Natural killer cell (primary cell): ENCODE measurements at regions of chr10 and their contacts with region 1.

Region 1: DNA sequence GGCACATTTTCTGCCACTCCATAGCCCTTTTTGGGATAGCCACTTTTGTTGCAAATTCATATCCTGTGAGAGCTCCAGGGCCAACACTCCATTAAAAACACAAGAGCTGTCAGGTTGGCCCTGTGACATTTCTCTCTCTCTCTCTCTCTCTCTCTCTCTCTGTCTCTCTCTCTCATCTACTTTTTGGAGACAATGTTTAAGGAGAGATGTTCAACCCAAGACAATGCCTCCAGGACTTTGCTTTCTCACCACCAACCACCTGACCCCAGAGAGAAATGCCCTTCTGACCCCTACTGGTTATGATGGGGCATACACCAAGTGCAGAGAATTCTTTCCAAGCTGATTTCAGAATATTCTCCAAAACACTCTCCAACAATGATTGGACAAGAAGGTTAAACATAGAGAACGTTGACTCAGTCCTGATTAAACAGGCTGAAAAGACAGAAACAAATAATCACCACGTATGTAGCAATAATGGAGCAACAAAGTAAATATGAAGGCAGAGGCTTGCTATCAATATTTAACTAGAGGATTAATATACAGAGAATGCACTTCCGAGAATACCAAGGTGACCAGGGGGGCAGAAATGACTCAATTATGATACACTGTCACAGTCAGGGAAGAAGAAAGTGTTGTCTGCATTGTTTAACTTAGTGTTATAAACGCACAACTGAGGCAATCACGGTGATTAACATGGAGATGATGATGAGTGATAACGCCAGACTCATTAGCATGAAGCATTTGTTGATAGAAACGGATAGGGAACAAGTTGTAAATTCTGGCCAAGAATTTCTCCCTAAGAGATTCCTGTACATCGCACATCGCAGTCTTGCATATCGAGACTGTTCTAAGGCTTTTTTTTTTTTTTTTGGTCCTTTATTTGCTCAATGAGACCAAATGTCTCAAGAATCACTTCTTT is 178.5 kb downstream of the NRP1 start:
- DNase-seq: peak in 1 of 2 donors; percentile 83
- ATAC-seq: peak; percentile 67 to 98 (median 94)
- H3K4me3 ChIP-seq: no peak overlapping the region
- H3K4me3 Mint-ChIP-seq: no peak overlapping the region
- H3K27ac ChIP-seq: no peak overlapping the region
- H3K27ac Mint-ChIP-seq: peak overlapping the region; percentile 2 to 19
- H3K4me1 ChIP-seq: peaks cover 10% of the 10 kb centered on the region
- H3K4me1 Mint-ChIP-seq: peaks cover 18 to 33% of the 10 kb centered on the region in 2 donors
- H3K27me3 ChIP-seq: no peaks in the 10 kb centered on the region
- H3K27me3 Mint-ChIP-seq: peaks cover 0 to 2% of the 10 kb centered on the region in 2 donors
- CTCF ChIP-seq: peak; percentile 75

Region 2: DNA sequence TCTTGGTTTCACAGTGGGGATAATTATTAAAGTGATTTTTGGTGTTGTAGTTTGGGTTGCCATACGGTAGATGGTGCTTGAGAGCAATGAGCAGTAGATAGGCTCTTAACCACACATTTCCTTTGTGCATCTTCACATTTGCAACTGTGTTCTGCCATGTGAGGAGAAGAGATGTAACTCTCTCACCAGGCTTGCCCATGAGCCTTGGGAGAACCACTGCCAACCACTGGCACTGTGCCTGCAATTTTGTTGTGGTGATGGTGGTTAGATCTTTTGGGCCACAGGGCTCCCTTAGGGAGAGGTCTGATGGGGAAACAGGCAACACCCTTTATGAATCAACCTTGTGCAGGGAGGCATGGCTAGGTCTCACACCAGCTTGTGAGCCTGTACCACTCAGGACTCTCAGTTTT is 505.7 kb before region 1 on chr10:
- intact Hi-C with region 1: loop called (anchors 10 kb)
- DNase-seq: peak in 1 of 2 donors; percentile 46
- ATAC-seq: peak; percentile 55 to 81 (median 69)
- H3K4me3 ChIP-seq: no peak overlapping the region
- H3K4me3 Mint-ChIP-seq: no peak overlapping the region
- H3K27ac ChIP-seq: no peak overlapping the region
- H3K27ac Mint-ChIP-seq: peak overlapping the region in 1 of 2 donors; percentile 73
- H3K4me1 ChIP-seq: peaks cover 6% of the 10 kb centered on the region
- H3K4me1 Mint-ChIP-seq: peaks cover 12 to 17% of the 10 kb centered on the region in 2 donors
- H3K27me3 ChIP-seq: no peaks in the 10 kb centered on the region
- H3K27me3 Mint-ChIP-seq: no peaks in the 10 kb centered on the region
- CTCF ChIP-seq: peak; percentile 25

Region 3: DNA sequence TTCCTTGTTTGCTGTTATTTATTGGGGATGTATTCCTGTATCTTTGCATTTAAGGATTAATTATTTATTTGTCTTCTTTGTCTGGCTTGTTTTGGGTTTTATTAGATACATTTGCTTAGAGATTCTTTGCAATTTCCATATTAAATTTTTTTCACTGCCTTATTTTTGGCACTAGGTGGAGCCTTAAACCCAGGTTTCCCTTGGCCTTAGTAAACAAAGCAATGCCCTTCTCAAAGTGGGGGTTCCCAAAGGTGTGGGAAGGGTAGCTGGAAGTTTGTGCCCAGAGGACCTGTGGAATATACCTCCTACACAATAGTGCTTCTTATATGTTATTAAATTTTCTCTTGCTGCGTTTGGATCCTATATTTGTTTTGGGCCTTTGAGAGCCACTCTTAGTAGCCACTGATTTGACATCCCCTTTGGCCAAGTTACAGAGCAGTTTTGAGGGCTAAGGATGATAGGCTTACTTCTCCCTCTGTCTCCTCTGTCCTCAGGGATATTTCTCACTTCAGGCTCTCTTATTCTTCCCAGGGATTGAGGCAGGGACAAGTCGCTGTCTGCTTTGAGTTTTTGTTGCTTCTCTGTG is 360.3 kb before region 1 on chr10:
- intact Hi-C with region 1: loop called (anchors 1 kb)
- DNase-seq: peak in 1 of 2 donors; percentile 66
- ATAC-seq: peak in 2 of 3 donors; percentile 61
- H3K4me3 ChIP-seq: no peak overlapping the region
- H3K4me3 Mint-ChIP-seq: no peak overlapping the region
- H3K27ac ChIP-seq: no peak overlapping the region
- H3K27ac Mint-ChIP-seq: no peak overlapping the region
- H3K4me1 ChIP-seq: no peaks in the 10 kb centered on the region
- H3K4me1 Mint-ChIP-seq: no peaks in the 10 kb centered on the region
- H3K27me3 ChIP-seq: no peaks in the 10 kb centered on the region
- H3K27me3 Mint-ChIP-seq: peaks cover 0 to 8% of the 10 kb centered on the region in 2 donors
- CTCF ChIP-seq: peak; percentile 85

Region 4: DNA sequence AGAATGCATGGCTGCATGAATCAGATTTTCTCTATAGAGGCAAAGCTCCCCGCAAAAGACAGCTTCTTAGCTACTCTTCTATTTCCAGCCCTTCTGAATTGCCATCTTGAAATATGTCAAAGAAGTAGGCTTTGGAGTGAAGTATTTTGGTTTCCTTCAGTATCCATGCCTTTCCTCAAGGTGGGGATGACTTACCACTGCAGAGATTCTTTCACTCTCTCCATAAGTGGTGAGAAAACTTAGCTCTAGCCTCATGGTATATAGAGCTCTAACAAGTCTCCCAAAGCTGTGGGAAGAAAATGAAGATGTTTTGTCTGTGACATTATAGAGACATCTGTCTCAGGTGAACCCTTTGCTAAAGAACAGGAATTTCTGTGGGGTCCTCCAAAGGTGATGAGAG is 108.3 kb before region 1 on chr10:
- intact Hi-C with region 1: loop called (anchors 5 kb)
- DNase-seq: no peak
- ATAC-seq: no peak
- H3K4me3 ChIP-seq: no peak overlapping the region
- H3K4me3 Mint-ChIP-seq: no peak overlapping the region
- H3K27ac ChIP-seq: no peak overlapping the region
- H3K27ac Mint-ChIP-seq: peak overlapping the region in 1 of 2 donors; percentile 56
- H3K4me1 ChIP-seq: peaks cover 16% of the 10 kb centered on the region
- H3K4me1 Mint-ChIP-seq: peaks cover 31 to 34% of the 10 kb centered on the region in 2 donors
- H3K27me3 ChIP-seq: no peaks in the 10 kb centered on the region
- H3K27me3 Mint-ChIP-seq: no peaks in the 10 kb centered on the region
- CTCF ChIP-seq: no peak

Region 5: GRCh38 chr10:33125522-33126517 is 30.2 kb before region 1 on chr10:
- intact Hi-C with region 1: no loop called
- DNase-seq: peak in 1 of 2 donors; percentile 77
- ATAC-seq: peak; percentile 78 to 81 (median 81)
- H3K4me3 ChIP-seq: no peak overlapping the region
- H3K4me3 Mint-ChIP-seq: peak overlapping the region; percentile 26
- H3K27ac ChIP-seq: peak overlapping the region; percentile 75
- H3K27ac Mint-ChIP-seq: peak overlapping the region; percentile 88 to 89
- H3K4me1 ChIP-seq: peaks cover 42% of the 10 kb centered on the region
- H3K4me1 Mint-ChIP-seq: peaks cover 42 to 45% of the 10 kb centered on the region in 2 donors
- H3K27me3 ChIP-seq: no peaks in the 10 kb centered on the region
- H3K27me3 Mint-ChIP-seq: no peaks in the 10 kb centered on the region
- CTCF ChIP-seq: no peak